MCF 10A (cell line): ENCODE measurements at regions of chr9 and their contacts with region 1.

Region 1: GRCh38 chr9:35903049-35903448 is 3.0 kb upstream of the HRCT1 start:
- DNase-seq: peak; percentile 76
- H3K4me3 Mint-ChIP-seq: no peak overlapping the region
- H3K27ac Mint-ChIP-seq: no peak overlapping the region
- H3K4me1 Mint-ChIP-seq: peaks cover 25% of the 10 kb centered on the region
- H3K27me3 Mint-ChIP-seq: no peaks in the 10 kb centered on the region
- CTCF ChIP-seq: peak; percentile 60

Region 2: GRCh38 chr9:35657546-35658136 is 245.4 kb before region 1 on chr9 and contains the start of gene RMRP:
- CTCF ChIA-PET with region 1: no interaction called
- POLR2A ChIA-PET with region 1: interaction called, 6 read pairs
- intact Hi-C with region 1: loop called (anchors 10 kb)
- DNase-seq: peak; percentile 99
- H3K4me3 Mint-ChIP-seq: peak within 1 kb of the TSS; percentile 62
- H3K27ac Mint-ChIP-seq: peak within 1 kb of the TSS; percentile 100
- H3K4me1 Mint-ChIP-seq: peaks cover 21% of the 10 kb centered on the region
- H3K27me3 Mint-ChIP-seq: no peaks in the 10 kb centered on the region
- CTCF ChIP-seq: no peak
- total RNA-seq, gene RMRP: 13,245 and 17,503 TPM in 2 replicates

Region 3: GRCh38 chr9:35891646-35892045 is 11.4 kb before region 1 on chr9:
- CTCF ChIA-PET with region 1: interaction called, 12 read pairs
- POLR2A ChIA-PET with region 1: interaction called, 8 read pairs
- intact Hi-C with region 1: no loop called
- DNase-seq: no peak
- H3K4me3 Mint-ChIP-seq: no peak overlapping the region
- H3K27ac Mint-ChIP-seq: no peak overlapping the region
- H3K4me1 Mint-ChIP-seq: no peaks in the 10 kb centered on the region
- H3K27me3 Mint-ChIP-seq: peaks cover 14% of the 10 kb centered on the region
- CTCF ChIP-seq: no peak

Region 4: GRCh38 chr9:35923927-35924763 is 21.1 kb after region 1 on chr9:
- CTCF ChIA-PET with region 1: interaction called, 14 read pairs
- POLR2A ChIA-PET with region 1: interaction called, 55 read pairs
- intact Hi-C with region 1: no loop called
- DNase-seq: peak; percentile 87
- H3K4me3 Mint-ChIP-seq: peak overlapping the region; percentile 49
- H3K27ac Mint-ChIP-seq: peak overlapping the region; percentile 90
- H3K4me1 Mint-ChIP-seq: peaks cover 16% of the 10 kb centered on the region
- H3K27me3 Mint-ChIP-seq: no peaks in the 10 kb centered on the region
- CTCF ChIP-seq: no peak

Region 5: DNA sequence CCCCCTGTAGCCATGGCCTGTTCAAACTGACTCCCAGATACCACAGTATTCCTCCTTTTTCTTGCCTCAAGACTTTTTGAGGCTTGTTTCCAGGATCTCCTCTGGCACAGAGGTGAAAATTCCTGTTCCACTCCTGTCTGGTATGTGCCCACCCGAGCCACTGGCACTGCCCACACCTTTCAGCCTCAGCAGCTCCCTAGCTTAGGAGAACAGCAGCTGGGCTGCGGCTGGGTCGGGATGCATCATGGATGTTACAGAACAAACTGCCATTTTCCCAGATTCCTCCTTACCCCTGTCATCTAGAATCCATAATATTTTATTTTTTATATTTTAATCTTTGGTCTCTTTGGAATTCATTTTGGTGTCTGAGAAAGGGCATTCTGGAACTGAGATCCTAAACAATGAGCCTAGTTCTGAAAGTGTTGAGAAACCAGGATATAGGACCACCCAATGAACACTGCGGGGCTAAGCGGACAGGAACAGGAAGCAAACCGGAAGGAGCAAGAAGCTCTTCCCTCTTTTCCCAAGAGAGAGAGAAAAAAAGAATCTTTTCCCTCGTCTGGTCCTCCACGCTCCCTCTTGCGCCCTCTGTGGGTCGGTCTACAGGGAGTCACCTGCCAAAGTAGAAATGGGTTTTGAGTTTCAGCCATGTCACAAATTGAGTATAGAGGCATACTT is 42.4 kb after region 1 on chr9:
- CTCF ChIA-PET with region 1: interaction called, 88 read pairs
- POLR2A ChIA-PET with region 1: interaction called, 52 read pairs
- intact Hi-C with region 1: loop called (anchors 1 kb)
- DNase-seq: peak; percentile 89
- H3K4me3 Mint-ChIP-seq: peak overlapping the region; percentile 72
- H3K27ac Mint-ChIP-seq: peak overlapping the region; percentile 79
- H3K4me1 Mint-ChIP-seq: peaks cover 7% of the 10 kb centered on the region
- H3K27me3 Mint-ChIP-seq: no peaks in the 10 kb centered on the region
- CTCF ChIP-seq: peak; percentile 73

Region 6: DNA sequence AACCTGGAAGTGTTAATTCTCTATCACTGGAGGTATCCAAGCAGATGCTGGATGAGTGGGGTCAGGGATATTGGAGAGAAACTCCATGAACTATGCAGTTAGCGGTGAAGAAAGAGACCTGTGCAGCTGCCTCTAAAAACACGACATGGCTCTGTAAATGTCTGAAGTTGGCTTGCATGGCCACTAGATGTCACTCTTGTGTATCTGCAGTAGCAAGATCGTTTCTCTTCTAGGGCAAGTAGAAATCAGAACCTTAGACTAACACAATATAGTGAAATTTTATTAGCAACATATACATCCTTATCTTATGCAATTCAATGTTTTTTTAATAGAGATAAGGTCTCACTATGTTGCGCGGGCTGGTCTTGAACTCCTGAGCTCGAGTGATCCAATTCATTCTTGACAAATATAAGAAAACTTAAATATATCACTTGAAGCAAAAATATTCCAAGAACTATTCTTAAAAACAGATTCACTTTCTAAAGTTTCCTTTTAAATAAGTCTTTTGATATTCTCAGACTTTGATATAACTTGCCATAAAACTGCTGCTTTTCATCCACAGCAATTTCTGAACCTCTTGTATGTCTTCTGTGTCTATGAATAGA is 52.0 kb after region 1 on chr9:
- CTCF ChIA-PET with region 1: interaction called, 6 read pairs
- POLR2A ChIA-PET with region 1: no interaction called
- intact Hi-C with region 1: loop called (anchors 2 kb)
- DNase-seq: peak; percentile 72
- H3K4me3 Mint-ChIP-seq: no peak overlapping the region
- H3K27ac Mint-ChIP-seq: no peak overlapping the region
- H3K4me1 Mint-ChIP-seq: peaks cover 7% of the 10 kb centered on the region
- H3K27me3 Mint-ChIP-seq: peaks cover 31% of the 10 kb centered on the region
- CTCF ChIP-seq: peak; percentile 83

Region 7: GRCh38 chr9:36023260-36024048 is 120.4 kb after region 1 on chr9:
- CTCF ChIA-PET with region 1: interaction called, 13 read pairs
- POLR2A ChIA-PET with region 1: interaction called, 3 read pairs
- intact Hi-C with region 1: loop called (anchors 1 kb)
- DNase-seq: peak; percentile 74
- H3K4me3 Mint-ChIP-seq: no peak overlapping the region
- H3K27ac Mint-ChIP-seq: no peak overlapping the region
- H3K4me1 Mint-ChIP-seq: peaks cover 6% of the 10 kb centered on the region
- H3K27me3 Mint-ChIP-seq: peaks cover 12% of the 10 kb centered on the region
- CTCF ChIP-seq: peak; percentile 84

Region 8: GRCh38 chr9:36053971-36054370 is 150.9 kb after region 1 on chr9:
- CTCF ChIA-PET with region 1: no interaction called
- POLR2A ChIA-PET with region 1: no interaction called
- intact Hi-C with region 1: no loop called
- DNase-seq: no peak
- H3K4me3 Mint-ChIP-seq: no peak overlapping the region
- H3K27ac Mint-ChIP-seq: no peak overlapping the region
- H3K4me1 Mint-ChIP-seq: no peaks in the 10 kb centered on the region
- H3K27me3 Mint-ChIP-seq: no peaks in the 10 kb centered on the region
- CTCF ChIP-seq: no peak